Mucosa of descending colon (tissue), 3 donors: ENCODE measurements at regions of chr11 and their contacts with region 1.

Region 1: DNA sequence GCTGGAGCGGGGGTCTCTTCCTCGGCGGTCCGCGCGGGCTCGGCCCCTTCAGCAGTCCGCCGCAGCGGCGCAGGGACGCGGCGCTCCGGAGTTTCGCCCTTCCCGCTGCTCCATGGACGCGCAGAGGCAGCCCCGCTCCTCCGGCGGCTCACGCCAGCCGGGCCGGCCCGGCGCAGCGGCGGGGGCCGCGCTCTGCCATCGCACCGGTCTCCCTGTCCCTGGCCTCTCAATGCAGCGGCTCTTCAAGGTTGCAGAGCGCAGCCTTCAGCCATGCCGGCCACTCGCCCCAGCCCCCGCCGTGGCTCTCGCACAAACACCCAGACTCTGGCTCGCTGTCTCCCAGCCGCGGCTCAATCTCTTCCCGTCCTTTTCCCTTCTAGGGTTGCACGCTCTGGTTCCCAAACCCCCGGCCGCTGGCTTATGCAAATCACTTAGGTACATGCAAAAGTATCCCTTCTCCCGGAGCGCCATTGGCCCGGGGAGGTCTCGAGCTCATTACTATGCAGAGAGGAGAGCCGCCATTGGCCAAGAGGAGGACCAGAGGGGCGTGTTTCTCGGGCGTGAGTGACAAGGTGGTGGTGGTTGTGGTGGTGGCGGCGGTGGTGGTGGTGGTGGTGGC is at the start of gene LGR4:
- DNase-seq: peak; percentile 94 to 95 (median 95)
- ATAC-seq: peak; percentile 86
- H3K4me3 ChIP-seq: peak within 1 kb of the TSS; percentile 94
- H3K4me1 ChIP-seq: peaks cover 7% of the 10 kb centered on the region
- CTCF ChIP-seq: no peak
- total RNA-seq, gene LGR4: 81.9 to 185 (median 104) TPM

Region 2: GRCh38 chr11:27234043-27234668 is 238.4 kb before region 1 on chr11:
- intact Hi-C with region 1: no loop called
- DNase-seq: peak; percentile 34 to 58 (median 57)
- ATAC-seq: peak; percentile 90
- H3K4me3 ChIP-seq: no peak overlapping the region
- H3K4me1 ChIP-seq: peaks cover 38% of the 10 kb centered on the region
- CTCF ChIP-seq: no peak

Region 3: DNA sequence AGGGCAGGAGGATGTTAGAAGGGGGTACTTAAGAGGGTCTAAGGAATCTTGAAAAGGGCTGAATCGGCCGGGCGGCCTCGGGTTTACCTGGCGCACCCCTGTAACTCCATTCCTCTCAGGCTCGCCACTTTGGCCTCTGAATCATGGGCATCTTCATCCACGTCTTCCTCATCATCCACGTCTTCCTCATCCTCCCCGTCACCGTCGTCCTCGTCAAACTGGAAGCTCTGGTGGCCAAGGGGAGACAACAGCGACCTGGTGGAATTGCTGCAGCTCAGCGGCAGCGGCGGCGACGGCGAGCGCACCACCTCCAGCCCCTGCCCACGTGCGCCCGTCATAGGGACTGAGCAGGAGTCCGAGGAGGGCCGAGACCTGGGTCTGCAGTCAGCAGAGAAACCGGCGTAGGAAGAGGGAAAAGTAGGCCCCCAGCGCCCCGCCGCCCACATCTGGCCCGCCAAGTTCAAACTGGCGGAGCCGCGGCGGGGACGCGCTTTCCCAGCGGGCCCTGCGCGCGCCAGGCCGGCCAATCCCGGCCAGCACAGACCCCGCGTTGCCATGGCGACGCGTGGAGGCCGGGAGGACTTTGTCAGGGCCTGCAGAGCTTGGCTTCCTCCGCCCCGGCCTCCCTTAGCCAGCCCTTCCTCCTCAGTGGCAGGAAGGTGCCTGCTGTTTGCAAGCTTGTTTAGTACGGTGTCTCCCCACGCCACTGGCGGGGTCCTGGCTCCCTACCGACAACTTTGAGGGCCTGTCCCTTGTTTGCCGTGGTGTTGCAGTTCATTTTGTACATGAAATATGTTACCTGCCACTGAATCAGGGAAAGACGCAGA is 109.5 kb before region 1 on chr11 and contains the start of gene CCDC34:
- intact Hi-C with region 1: no loop called
- DNase-seq: peak; percentile 90 to 94 (median 94)
- ATAC-seq: peak; percentile 99
- H3K4me3 ChIP-seq: peak within 1 kb of the TSS; percentile 25
- H3K4me1 ChIP-seq: no peaks in the 10 kb centered on the region
- CTCF ChIP-seq: no peak
- total RNA-seq, gene CCDC34: 7.2 to 11.2 (median 10.1) TPM

Region 4: DNA sequence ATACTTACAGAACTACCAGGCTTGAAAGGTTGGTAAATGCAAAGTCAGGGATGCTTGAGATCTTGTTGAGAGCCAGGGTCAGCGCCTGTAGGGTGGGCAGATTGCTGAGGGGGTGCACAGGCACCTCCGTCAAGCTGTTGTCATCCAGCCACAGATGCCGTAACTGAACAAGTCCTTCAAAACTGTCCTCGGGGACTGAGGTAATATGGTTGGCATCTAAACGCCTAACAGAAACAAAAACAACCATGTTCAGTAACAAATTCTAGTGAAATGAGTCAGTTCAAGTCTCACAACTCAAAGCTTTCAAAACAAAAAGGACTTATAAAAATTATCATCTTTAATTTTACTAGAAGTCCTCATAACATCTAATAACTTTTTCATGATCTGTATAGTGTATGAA is 87.3 kb before region 1 on chr11:
- intact Hi-C with region 1: loop called in 1 of 2 experiments (anchors 5 kb)
- DNase-seq: no peak
- ATAC-seq: no peak
- H3K4me3 ChIP-seq: no peak overlapping the region
- H3K4me1 ChIP-seq: peaks cover 7% of the 10 kb centered on the region
- CTCF ChIP-seq: no peak

Region 5: GRCh38 chr11:27401833-27402316 is 70.6 kb before region 1 on chr11:
- intact Hi-C with region 1: loop called in 1 of 2 experiments (anchors 5 kb)
- DNase-seq: no peak
- ATAC-seq: peak; percentile 86
- H3K4me3 ChIP-seq: no peak overlapping the region
- H3K4me1 ChIP-seq: peaks cover 53% of the 10 kb centered on the region
- CTCF ChIP-seq: no peak

Region 6: GRCh38 chr11:27571156-27571825 is 98.8 kb after region 1 on chr11:
- intact Hi-C with region 1: no loop called
- DNase-seq: no peak
- ATAC-seq: no peak
- H3K4me3 ChIP-seq: no peak overlapping the region
- H3K4me1 ChIP-seq: no peaks in the 10 kb centered on the region
- CTCF ChIP-seq: no peak